Naive thymus-derived CD4-positive, alpha-beta T cell (primary cell): ENCODE measurements at regions of chr17 and their contacts with region 1.

Region 1: GRCh38 chr17:78214706-78215061 is 631 bp downstream of the BIRC5 start:
- DNase-seq: no peak
- ATAC-seq: no peak
- H3K4me3 ChIP-seq: no peak overlapping the region
- H3K4me3 Mint-ChIP-seq: peak overlapping the region in 9 of 10 donors; percentile 44 to 97 (median 68)
- H3K27ac ChIP-seq: no peak overlapping the region
- H3K27ac Mint-ChIP-seq: peak overlapping the region in 1 of 9 donors; percentile 87
- H3K4me1 ChIP-seq: peaks cover 5 to 6% of the 10 kb centered on the region in 2 donors
- H3K4me1 Mint-ChIP-seq: peaks cover 0 to 25% (median 4%) of the 10 kb centered on the region in 7 donors
- H3K27me3 ChIP-seq: no peaks in the 10 kb centered on the region
- H3K27me3 Mint-ChIP-seq: no peaks in the 10 kb centered on the region

Region 2: DNA sequence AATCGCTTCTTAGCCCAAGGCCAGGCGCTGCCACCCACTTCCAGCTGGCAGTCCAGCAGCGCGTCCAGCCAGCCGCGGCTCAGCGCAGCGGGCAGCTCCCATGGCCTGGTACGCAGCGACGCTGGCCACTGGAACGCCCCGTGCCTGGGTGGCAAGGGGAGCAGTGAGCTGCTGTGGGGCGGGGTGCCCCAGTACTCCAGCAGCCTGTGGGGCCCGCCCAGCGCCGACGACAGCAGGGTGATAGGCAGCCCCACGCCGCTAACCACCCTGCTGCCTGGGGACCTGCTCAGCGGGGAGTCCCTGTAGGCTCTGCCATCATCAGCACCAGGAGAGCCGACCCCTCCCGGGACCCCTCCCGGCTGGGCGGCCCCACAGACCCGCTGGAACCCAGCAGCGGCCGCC is 110.1 kb before region 1 on chr17:
- CTCF ChIA-PET with region 1: no interaction called
- POLR2A ChIA-PET with region 1: no interaction called
- intact Hi-C with region 1: no loop called
- DNase-seq: no peak
- ATAC-seq: no peak
- H3K4me3 ChIP-seq: no peak overlapping the region
- H3K4me3 Mint-ChIP-seq: no peak overlapping the region
- H3K27ac ChIP-seq: no peak overlapping the region
- H3K27ac Mint-ChIP-seq: no peak overlapping the region
- H3K4me1 ChIP-seq: no peaks in the 10 kb centered on the region
- H3K4me1 Mint-ChIP-seq: peaks cover 5 to 24% (median 17%) of the 10 kb centered on the region in 7 donors
- H3K27me3 ChIP-seq: no peaks in the 10 kb centered on the region
- H3K27me3 Mint-ChIP-seq: no peaks in the 10 kb centered on the region

Region 3: DNA sequence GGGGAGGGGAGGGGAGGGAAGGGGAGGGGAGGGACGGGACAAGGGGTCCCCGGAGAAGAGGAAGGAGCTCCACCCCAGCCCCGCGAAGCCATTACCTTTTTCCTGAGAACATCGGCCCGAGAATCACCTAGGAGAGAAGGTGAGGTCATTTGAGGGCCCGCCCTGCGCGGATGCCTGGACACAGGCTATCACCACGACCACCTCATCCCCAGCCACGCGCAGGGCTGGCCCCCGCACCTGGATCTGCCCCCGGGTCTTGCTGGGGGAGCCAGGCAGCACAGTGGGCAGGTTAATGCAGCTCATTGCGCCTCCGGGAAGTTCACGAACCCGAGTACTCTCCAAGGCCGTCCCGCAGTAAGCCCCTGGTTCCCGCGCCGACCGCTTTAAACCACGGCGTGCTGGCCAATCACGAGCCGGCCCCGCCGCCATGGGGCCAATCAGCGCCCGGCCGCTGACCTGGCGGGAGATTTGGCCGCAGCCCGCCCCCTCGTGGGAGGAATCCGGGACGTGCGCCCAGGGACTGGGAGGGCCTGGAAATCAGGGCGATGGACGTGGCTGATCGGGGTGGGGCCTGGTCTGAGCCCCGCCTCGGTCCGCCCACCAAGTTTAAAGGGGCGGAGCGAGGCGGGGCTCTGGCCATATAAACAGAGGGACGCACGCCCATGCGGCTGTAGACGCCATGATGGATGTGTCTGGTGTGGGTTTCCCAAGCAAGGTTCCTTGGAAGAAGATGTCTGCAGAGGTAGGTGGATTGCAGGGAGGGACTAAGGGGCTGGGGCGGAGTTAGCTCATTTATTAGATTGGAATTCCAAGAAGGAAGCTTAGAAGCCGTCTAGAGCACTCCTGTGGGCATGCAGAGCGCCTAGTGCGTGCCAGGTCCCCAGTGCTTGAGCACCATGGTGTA is 27.7 kb before region 1 on chr17 and contains the starts of genes AFMID and TK1:
- CTCF ChIA-PET with region 1: no interaction called
- POLR2A ChIA-PET with region 1: no interaction called
- intact Hi-C with region 1: loop called in 1 of 2 experiments (anchors 1 kb)
- DNase-seq: peak; percentile 33 to 96 (median 56)
- ATAC-seq: peak; percentile 95
- H3K4me3 ChIP-seq: peak within 1 kb of the TSS; percentile 62
- H3K4me3 Mint-ChIP-seq: peak within 1 kb of the TSS; percentile 75 to 91 (median 85)
- H3K27ac ChIP-seq: no peak within 1 kb of the TSS
- H3K27ac Mint-ChIP-seq: peak within 1 kb of the TSS in 8 of 9 donors; percentile 14 to 81 (median 63)
- H3K4me1 ChIP-seq: peaks cover 0 to 5% of the 10 kb centered on the region in 2 donors
- H3K4me1 Mint-ChIP-seq: peaks cover 0 to 39% (median 13%) of the 10 kb centered on the region in 7 donors
- H3K27me3 ChIP-seq: no peaks in the 10 kb centered on the region
- H3K27me3 Mint-ChIP-seq: no peaks in the 10 kb centered on the region
- total RNA-seq, gene AFMID: 1.2 to 19.2 (median 3.0) TPM
- total RNA-seq, gene TK1: 0.29 to 57.7 (median 1.0) TPM in 3 of 5 experiments, not detected in the others

Region 4: DNA sequence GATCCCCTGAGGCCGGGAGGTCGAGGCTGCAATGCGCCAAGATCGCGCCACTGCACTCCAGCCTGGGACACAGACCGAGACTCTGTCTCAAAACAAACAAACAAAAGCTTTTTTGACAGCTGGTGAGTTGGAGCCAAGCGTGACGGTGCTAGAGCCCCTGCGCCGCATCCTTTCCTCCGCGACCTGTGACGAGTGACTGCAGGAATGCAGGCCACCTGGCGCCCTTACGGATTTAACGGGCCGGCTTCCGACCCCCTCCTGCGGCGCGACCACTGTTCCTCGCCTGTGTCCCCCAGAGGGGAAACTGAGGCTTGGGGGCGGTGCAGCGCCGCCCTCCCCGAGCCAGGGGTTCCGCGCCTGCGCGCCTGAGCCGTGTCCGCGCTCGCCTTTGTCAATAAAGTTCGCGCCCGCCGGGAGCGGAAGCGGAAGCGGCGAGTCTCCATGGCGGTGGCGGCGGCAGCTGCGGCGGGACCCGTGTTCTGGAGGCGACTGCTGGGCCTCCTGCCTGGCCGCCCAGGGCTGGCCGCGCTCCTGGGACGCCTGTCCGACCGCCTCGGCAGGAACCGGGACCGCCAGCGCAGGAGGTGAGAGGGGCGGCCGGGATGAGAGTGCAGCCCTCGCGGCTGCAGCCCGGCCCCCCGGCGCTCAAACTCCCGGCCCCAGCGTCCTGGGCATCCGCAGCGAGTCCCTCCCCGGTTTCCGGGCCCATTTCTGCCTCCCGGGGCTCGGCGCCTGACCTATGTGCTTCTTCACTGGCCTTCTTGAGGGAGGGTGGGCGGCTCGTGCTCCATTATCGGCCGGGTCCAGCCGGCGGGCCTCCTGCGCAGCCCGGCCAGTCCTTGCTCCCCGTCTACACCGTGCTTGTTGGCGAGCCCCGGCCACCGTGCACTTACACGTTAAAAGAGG is 163.8 kb after region 1 on chr17 and contains the start of gene PGS1:
- CTCF ChIA-PET with region 1: no interaction called
- POLR2A ChIA-PET with region 1: no interaction called
- intact Hi-C with region 1: loop called in 1 of 2 experiments (anchors 1 kb)
- DNase-seq: peak; percentile 76 to 91 (median 87)
- ATAC-seq: peak; percentile 70
- H3K4me3 ChIP-seq: peak within 1 kb of the TSS; percentile 82
- H3K4me3 Mint-ChIP-seq: peak within 1 kb of the TSS; percentile 65 to 96 (median 93)
- H3K27ac ChIP-seq: peak within 1 kb of the TSS; percentile 73
- H3K27ac Mint-ChIP-seq: peak within 1 kb of the TSS; percentile 87 to 93 (median 91)
- H3K4me1 ChIP-seq: peaks cover 35 to 44% of the 10 kb centered on the region in 2 donors
- H3K4me1 Mint-ChIP-seq: peaks cover 38 to 51% (median 42%) of the 10 kb centered on the region in 7 donors
- H3K27me3 ChIP-seq: no peaks in the 10 kb centered on the region
- H3K27me3 Mint-ChIP-seq: no peaks in the 10 kb centered on the region
- total RNA-seq, gene PGS1: 66.6 to 84.3 (median 82.0) TPM